Vagina (tissue), 2 donors: ENCODE measurements at regions of chr19 and their contacts with region 1.

Region 1: DNA sequence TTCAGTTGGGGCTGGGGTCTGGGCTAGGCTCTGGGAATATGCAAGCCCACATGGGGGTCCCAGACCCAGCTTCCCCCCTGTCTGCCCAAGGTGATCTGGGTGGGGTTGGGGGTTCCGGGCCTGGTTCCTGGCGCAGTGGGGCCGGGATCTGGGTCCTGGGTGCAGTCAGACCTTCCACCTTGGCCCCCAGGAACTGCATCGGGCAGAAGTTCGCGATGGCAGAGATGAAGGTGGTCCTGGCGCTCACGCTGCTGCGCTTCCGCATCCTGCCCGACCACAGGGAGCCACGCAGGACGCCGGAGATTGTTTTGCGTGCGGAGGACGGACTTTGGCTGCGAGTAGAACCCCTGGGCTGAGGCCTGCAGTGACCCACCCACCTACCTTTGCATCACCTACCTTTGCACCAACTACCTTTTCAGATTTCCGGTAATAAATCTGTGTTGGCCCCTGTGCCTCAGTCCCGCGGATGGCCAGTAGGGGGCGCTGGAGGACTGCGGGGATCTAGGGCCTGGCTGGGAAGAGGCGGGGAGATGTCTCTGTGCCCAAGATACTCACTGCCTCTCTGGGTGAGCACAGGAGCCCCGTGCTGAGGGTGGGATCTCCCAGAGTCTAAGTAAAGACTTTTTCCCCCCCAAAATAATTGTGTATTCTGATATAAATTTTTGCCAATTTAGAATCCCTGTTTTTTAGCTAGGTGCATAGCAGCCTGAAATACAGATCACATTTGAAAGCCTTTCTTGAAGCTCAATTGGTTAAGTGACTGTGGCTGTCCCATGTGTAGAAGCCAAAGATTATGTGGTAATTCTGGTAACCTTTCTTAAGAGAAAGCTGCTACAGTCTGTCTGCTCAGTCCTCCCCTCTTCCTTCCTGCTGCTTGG is 11.5 kb upstream of the CYP4F3 start:
- DNase-seq: no peak
- H3K4me3 ChIP-seq: no peak overlapping the region
- H3K27ac ChIP-seq: no peak overlapping the region
- H3K4me1 ChIP-seq: no peaks in the 10 kb centered on the region
- H3K27me3 ChIP-seq: no peaks in the 10 kb centered on the region
- CTCF ChIP-seq: peak; percentile 90 to 97 (median 92)
- POLR2A ChIP-seq: no peak

Region 2: GRCh38 chr19:15871570-15871969 is 242.3 kb after region 1 on chr19:
- intact Hi-C with region 1: loop called (anchors 10 kb)
- DNase-seq: no peak
- H3K4me3 ChIP-seq: no peak overlapping the region
- H3K27ac ChIP-seq: no peak overlapping the region
- H3K4me1 ChIP-seq: no peaks in the 10 kb centered on the region
- H3K27me3 ChIP-seq: no peaks in the 10 kb centered on the region
- CTCF ChIP-seq: no peak
- POLR2A ChIP-seq: no peak

Region 3: GRCh38 chr19:16185123-16185767 is 556.0 kb after region 1 on chr19 and contains the start of gene FAM32A:
- intact Hi-C with region 1: loop called (anchors 10 kb)
- DNase-seq: peak in 1 of 2 donors; percentile 99
- H3K4me3 ChIP-seq: peak within 1 kb of the TSS; percentile 67 to 84
- H3K27ac ChIP-seq: peak within 1 kb of the TSS; percentile 72
- H3K4me1 ChIP-seq: peaks cover 35% of the 10 kb centered on the region
- H3K27me3 ChIP-seq: no peaks in the 10 kb centered on the region
- CTCF ChIP-seq: peak in 1 of 3 experiments; percentile 13
- POLR2A ChIP-seq: peak in 1 of 2 donors; percentile 63
- total RNA-seq, gene FAM32A: 57.2 TPM